Activated CD4-positive, alpha-beta memory T cell treated with anti-CD3 and anti-CD28 coated beads for 36 hours (primary cell): ENCODE measurements at regions of chr1 and their contacts with region 1.

Region 1: DNA sequence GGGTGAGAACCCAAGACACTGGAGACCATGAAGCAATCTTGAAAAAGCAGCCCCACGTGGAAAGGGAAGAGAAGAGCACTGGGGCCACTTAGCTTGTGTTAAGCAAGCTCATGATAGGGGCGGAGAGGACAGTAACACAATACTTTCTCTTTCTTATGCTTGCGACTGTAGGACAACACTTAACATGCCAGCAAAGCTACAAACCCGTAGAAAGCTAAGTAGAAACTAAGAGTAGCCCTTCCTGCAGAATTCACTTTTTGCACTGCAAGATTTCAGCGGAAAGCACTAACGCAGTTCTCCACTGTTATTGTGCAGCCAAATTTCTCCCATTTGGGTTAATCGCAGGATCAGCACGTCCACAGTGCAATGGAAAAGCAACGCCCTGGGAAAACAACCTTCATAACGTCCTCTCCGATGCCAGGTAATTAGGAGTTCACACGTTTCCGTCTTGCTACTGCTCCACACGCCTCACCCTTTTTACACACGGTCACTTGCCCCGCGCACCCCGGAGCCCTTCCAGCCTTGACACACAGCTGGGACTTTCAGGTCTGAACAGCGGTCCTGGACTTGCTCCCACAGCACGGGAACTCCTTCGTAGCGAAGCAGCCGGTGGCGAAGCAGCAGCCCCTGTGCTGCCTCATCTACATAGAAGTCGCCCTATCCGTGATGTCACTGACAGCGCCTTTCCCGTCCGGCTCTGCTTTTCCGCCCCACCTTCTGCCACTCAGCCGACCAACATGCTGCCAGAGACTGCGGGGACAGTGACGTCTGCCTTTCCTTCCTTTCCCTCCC is 148.6 kb downstream of the PPIAL4G start:
- DNase-seq: peak; percentile 89
- H3K4me3 Mint-ChIP-seq: peak overlapping the region; percentile 85
- H3K27ac Mint-ChIP-seq: peak overlapping the region; percentile 97
- H3K4me1 Mint-ChIP-seq: peaks cover 26% of the 10 kb centered on the region
- H3K27me3 Mint-ChIP-seq: peaks cover 7% of the 10 kb centered on the region

Region 2: GRCh38 chr1:148263128-148263905 is 71.2 kb before region 1 on chr1:
- CTCF ChIA-PET with region 1: no interaction called
- POLR2A ChIA-PET with region 1: interaction called, 213 read pairs
- intact Hi-C with region 1: loop called (anchors 2 kb)
- DNase-seq: peak; percentile 85
- H3K4me3 Mint-ChIP-seq: peak overlapping the region; percentile 80
- H3K27ac Mint-ChIP-seq: peak overlapping the region; percentile 96
- H3K4me1 Mint-ChIP-seq: peaks cover 19% of the 10 kb centered on the region
- H3K27me3 Mint-ChIP-seq: no peaks in the 10 kb centered on the region

Region 3: DNA sequence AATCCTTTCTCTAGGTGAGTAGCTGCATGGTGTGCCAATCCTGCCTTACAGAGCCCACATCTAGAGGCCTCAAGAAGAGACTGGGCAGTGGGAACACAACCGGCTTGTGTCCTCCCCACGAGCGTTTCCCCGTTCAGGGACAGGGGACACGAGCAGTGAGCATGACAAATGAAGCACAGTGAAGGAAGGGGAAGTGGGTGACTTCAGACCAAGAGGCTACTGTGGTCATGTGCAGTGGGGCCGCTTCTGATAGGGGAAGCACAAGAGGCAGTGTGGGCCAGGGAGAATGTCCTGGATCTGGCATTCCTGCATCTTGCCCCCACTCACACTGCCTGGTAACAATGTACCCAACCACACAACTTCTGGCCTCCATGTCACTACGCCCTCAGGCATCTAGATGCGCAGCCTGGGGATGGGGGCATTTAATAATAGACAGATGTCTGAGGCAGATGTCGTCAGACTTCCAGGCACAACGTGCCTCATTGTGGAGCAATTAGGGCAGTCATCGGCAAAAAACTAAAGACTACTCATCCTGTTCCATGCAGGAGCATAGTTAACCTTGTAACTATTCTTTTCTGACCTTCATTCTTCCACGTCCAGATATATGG is 26.8 kb before region 1 on chr1:
- CTCF ChIA-PET with region 1: interaction called, 5 read pairs
- POLR2A ChIA-PET with region 1: interaction called, 24 read pairs
- intact Hi-C with region 1: no loop called
- DNase-seq: no peak
- H3K4me3 Mint-ChIP-seq: no peak overlapping the region
- H3K27ac Mint-ChIP-seq: no peak overlapping the region
- H3K4me1 Mint-ChIP-seq: peaks cover 11% of the 10 kb centered on the region
- H3K27me3 Mint-ChIP-seq: peaks cover 54% of the 10 kb centered on the region

Region 4: DNA sequence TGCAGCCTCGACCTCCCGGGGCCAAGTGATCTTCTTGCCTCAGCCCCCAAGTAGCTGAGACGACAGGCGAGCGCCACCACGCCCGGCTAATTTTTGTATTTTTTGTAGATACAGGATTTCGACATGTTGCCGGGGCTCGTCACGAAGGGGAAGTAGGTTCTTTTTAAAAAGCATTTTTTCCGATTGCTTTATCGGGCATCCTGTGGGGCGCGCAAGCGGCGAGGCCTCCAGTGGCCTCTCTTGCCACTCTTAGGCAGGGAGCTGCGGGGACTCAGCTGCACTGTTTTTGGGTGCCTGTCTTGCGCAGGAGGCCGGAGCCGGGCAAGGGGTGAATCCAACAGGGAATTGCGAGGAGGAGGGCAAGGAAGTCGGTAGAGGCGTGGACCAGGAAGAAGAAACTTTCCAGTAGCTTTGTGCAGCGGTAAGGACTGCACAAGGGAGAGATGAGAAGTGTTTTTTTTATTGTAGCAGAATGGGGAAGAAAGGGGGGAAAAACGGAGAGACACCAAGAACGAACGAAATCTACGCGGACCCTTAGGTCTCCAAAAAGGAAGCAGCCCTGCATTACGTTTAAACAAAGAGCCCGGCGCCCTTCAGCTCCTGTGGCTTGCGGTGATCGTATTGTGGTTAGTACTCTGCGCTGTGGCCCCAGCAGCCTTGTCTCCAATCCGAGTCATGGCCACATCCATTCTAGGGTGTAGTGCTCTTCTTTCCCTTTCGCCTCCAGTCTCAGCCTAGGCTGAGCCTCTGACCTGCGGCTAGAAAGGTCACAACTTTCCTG is 16.2 kb before region 1 on chr1:
- CTCF ChIA-PET with region 1: interaction called, 4 read pairs
- POLR2A ChIA-PET with region 1: interaction called, 25 read pairs
- intact Hi-C with region 1: loop called (anchors 1 kb)
- DNase-seq: peak; percentile 86
- H3K4me3 Mint-ChIP-seq: peak overlapping the region; percentile 78
- H3K27ac Mint-ChIP-seq: peak overlapping the region; percentile 84
- H3K4me1 Mint-ChIP-seq: peaks cover 30% of the 10 kb centered on the region
- H3K27me3 Mint-ChIP-seq: peaks cover 19% of the 10 kb centered on the region

Region 5: DNA sequence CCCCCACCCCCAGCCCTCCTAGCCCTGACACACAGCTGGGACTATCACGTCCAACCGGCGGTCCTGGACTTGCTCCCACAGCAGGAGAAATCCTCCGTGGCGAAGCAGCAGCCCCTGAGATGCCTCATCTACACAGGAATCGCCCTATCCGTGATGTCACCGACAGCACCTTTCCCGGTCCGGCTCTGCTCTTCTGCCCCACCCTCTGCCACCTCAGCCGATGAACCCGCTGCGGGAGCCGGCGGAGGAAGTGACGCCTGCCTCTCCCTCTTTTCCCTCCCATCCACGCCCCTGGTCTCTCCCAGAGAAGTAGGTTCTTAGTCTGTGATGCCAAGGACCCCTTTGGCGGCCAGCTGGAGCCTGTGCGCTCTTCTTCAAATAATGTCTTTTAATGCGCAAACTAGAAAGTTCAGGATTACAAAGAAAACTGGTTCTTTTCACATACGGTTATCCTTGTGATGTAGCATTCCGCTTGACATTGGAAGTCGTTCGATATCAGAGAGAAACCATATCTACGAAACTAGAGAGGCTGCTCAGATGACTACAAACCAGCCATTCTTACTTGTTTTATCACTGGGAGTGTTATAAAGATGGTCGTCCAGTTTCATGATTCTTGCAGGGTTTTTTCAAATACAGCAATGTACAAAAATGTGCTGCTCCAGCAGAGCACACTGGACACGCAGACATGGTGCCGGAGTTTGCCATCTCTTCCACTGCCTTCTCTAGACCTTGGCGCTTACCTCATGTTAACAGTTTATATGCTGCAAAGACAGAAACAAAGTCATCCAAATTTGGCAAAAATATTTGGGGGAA is 28.3 kb after region 1 on chr1:
- CTCF ChIA-PET with region 1: interaction called, 3 read pairs
- POLR2A ChIA-PET with region 1: interaction called, 14 read pairs
- intact Hi-C with region 1: loop called (anchors 2 kb)
- DNase-seq: peak; percentile 73
- H3K4me3 Mint-ChIP-seq: peak overlapping the region; percentile 80
- H3K27ac Mint-ChIP-seq: peak overlapping the region; percentile 88
- H3K4me1 Mint-ChIP-seq: peaks cover 50% of the 10 kb centered on the region
- H3K27me3 Mint-ChIP-seq: peaks cover 2% of the 10 kb centered on the region

Region 6: DNA sequence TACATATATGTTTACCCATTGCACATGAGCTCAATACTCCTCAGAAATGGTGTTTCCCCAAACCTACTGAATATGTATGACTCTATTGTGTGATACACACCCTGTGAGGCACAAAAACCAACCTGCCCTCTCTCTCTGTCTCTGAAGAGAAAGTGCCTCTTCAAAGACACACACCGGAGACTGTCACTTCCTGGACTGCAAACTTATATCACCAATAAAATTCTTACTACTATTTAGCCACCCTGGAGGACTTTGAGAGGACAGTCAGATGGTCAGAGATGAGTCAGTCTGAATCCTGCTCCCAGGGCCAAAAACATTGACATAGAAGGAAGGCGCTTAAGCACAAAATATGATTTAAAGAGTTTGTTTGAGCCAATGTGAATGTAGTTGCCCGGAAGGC is 38.2 kb after region 1 on chr1:
- CTCF ChIA-PET with region 1: no interaction called
- POLR2A ChIA-PET with region 1: interaction called, 18 read pairs
- intact Hi-C with region 1: no loop called
- DNase-seq: peak; percentile 70
- H3K4me3 Mint-ChIP-seq: peak overlapping the region; percentile 62
- H3K27ac Mint-ChIP-seq: peak overlapping the region; percentile 88
- H3K4me1 Mint-ChIP-seq: peaks cover 40% of the 10 kb centered on the region
- H3K27me3 Mint-ChIP-seq: no peaks in the 10 kb centered on the region

Region 7: DNA sequence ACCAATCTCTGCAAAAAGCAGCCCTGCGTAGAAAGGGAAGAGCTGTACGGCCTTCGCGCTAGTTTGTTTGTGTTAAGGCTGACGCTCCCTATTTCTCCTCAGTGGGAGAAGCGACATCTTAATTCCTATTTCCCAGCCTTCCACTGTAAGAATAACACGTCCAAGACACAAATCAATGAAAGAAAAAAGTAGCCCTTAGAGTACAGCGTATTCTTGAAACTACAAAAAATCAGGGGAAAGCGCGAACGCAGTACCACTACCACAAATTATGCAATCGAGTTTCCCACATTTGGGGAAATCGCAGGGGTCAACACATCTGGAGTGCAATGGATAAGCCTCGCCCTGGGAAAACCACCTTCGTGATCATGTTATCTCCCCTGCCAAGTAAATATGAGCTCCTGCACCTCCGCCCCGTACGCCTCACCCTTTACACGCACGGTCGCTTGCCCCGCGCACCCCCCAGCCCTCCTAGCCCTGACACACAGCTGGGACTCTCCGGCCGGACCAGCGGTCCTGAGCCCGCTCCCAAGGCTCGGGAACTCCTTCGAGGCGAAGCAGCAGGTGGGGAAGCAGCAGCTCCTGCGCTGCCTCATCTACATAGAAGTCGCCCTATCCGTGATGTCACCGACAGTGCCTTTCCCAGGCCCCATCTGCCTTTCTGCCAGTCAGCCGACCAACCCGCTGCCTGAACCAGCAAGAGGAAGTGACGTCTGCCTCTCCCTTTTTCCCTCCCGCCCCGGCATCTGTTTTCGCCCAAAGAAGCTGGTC is 53.9 kb after region 1 on chr1:
- CTCF ChIA-PET with region 1: no interaction called
- POLR2A ChIA-PET with region 1: interaction called, 37 read pairs
- intact Hi-C with region 1: loop called (anchors 2 kb)
- DNase-seq: peak; percentile 95
- H3K4me3 Mint-ChIP-seq: peak overlapping the region; percentile 88
- H3K27ac Mint-ChIP-seq: peak overlapping the region; percentile 99
- H3K4me1 Mint-ChIP-seq: peaks cover 39% of the 10 kb centered on the region
- H3K27me3 Mint-ChIP-seq: no peaks in the 10 kb centered on the region